HCT116 (cell line): ENCODE measurements at regions of chr3 and their contacts with region 1.

Region 1: DNA sequence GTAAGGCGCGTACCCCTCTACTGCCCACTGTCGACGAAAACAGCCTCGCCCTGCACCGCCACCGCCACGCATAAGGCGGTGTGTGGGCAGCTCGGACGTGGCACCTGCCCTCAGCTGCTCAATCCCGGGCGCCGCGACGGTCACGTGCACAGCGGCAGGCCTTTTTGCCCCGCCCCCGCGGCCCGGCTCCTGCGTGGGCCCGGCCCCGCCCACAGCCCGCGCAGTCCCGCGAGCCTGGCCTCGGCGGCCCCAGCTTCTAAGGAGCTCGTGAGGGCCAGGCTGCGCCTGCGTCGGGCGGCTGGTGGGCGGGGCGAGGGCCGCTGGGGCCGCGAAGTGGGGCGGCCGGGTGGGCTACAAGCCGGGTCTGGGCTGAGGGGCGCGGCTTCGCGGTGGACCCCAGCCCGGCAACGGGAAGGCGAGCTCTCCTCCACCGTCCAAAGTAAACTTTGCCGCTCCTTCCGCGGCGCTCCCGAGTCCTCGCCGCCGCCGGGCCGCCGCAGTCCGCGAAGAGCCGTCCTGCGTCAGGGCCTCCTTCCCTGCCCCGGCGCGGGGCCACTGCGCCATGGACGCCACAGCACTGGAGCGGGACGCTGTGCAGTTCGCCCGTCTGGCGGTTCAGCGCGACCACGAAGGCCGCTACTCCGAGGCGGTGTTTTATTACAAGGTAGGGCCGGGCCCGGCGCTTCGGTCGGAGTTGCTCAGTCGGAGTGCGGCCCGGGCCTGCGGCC is at the start of gene CAPN7:
- DNase-seq: peak; percentile 85
- ATAC-seq: peak; percentile 93
- H3K4me3 ChIP-seq: peak within 1 kb of the TSS; percentile 84 to 92
- H3K27ac ChIP-seq: peak within 1 kb of the TSS; percentile 75
- H3K4me1 ChIP-seq: peaks cover 6 to 18% of the 10 kb centered on the region in 2 experiments; a peak in 3 of 4 replicates
- H3K27me3 ChIP-seq: no peaks in the 10 kb centered on the region
- CTCF ChIP-seq: peak in 2 of 3 experiments; percentile 36 to 50; a peak in 3 of 6 replicates
- POLR2A ChIP-seq: peak; percentile 74
- RAD21 ChIP-seq: no peak
- total RNA-seq, gene CAPN7: 27.7 TPM

Region 2: DNA sequence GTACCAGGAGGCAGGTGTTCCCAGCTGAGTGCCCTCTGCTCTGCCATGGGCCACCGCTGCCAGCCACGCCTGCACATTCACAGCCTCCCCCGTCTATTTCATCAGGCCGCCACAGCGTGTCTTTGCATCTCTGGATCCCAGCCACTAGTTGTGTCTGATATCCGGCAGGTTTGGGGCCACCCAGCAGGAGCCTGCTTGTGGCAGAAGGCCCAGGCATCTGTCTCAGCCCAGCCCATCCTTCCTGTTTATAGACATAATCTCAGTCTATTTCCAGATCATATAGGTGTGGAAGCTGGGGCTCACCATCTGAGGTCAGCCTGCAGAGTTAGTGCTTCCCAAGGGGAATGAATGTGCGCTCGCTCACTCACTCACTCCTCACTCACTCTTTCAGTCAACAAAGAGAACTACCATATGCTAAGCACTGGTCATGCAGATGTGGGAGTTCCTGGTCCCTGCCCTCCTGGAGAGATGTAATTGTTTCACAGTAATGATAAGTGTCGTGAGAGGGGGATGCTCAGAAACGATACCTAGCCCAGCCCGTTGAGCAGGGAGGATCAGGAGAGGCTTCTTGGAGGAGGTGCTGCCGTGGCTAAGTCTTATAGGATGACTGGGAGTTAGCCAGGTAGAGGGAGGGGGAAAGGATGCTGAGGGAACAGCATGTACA is 326.8 kb before region 1 on chr3:
- CTCF ChIA-PET with region 1: no interaction called
- POLR2A ChIA-PET with region 1: no interaction called
- RAD21 ChIA-PET with region 1: no interaction called
- intact Hi-C with region 1: no loop called
- DNase-seq: no peak
- ATAC-seq: peak; percentile 74
- H3K4me3 ChIP-seq: no peak overlapping the region
- H3K27ac ChIP-seq: no peak overlapping the region
- H3K4me1 ChIP-seq: peaks cover 0 to 8% of the 10 kb centered on the region in 2 experiments; a peak in 1 of 4 replicates
- H3K27me3 ChIP-seq: no peaks in the 10 kb centered on the region; the same call in 1 of the 2 replicates
- CTCF ChIP-seq: no peak
- POLR2A ChIP-seq: no peak
- RAD21 ChIP-seq: no peak

Region 3: DNA sequence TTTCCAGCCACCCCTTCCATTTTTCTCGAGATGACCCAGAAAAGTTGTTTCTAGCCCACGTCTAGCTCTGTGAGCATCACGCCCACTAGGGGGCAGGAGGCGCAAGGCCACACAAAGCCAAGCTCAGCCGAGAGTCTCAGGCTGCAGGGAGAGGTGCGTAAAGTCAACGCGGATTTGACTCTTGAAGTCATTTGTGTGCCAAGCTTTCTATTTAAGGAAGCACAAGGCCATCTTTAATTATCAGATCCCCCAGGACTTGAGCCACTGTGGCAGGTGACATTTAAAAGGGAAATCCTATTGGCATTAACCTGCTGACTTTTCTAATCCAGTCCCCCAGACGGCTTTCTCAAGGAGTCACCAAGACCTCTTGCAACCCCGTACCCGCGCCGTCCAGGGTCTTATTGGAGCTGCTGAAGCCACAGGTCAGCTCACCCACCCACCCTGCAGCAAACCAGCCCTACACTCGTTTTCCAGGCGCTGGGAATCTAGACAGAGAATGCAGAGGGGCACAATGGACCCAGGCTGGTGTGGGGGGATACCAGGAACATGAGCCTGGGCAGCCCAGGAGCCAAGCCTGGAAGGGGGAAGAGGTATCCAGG is 62.0 kb after region 1 on chr3:
- CTCF ChIA-PET with region 1: interaction called, 12 read pairs
- POLR2A ChIA-PET with region 1: no interaction called
- RAD21 ChIA-PET with region 1: no interaction called
- intact Hi-C with region 1: no loop called
- DNase-seq: peak; percentile 65
- ATAC-seq: peak; percentile 77
- H3K4me3 ChIP-seq: no peak overlapping the region
- H3K27ac ChIP-seq: no peak overlapping the region
- H3K4me1 ChIP-seq: peaks cover 13 to 29% of the 10 kb centered on the region in 2 experiments
- H3K27me3 ChIP-seq: no peaks in the 10 kb centered on the region
- CTCF ChIP-seq: peak; percentile 95 to 97 (median 96)
- POLR2A ChIP-seq: no peak
- RAD21 ChIP-seq: peak; percentile 99

Region 4: GRCh38 chr3:15405448-15406050 is 199.5 kb after region 1 on chr3:
- CTCF ChIA-PET with region 1: interaction called, 43 read pairs
- POLR2A ChIA-PET with region 1: no interaction called
- RAD21 ChIA-PET with region 1: interaction called in 1 of 2 experiments, 4 read pairs
- intact Hi-C with region 1: no loop called
- DNase-seq: peak; percentile 48
- ATAC-seq: peak; percentile 81
- H3K4me3 ChIP-seq: no peak overlapping the region
- H3K27ac ChIP-seq: no peak overlapping the region
- H3K4me1 ChIP-seq: peaks cover 0 to 5% of the 10 kb centered on the region in 2 experiments; a peak in 1 of 4 replicates
- H3K27me3 ChIP-seq: no peaks in the 10 kb centered on the region
- CTCF ChIP-seq: peak; percentile 55 to 74 (median 69)
- POLR2A ChIP-seq: no peak
- RAD21 ChIP-seq: peak; percentile 74

Region 5: DNA sequence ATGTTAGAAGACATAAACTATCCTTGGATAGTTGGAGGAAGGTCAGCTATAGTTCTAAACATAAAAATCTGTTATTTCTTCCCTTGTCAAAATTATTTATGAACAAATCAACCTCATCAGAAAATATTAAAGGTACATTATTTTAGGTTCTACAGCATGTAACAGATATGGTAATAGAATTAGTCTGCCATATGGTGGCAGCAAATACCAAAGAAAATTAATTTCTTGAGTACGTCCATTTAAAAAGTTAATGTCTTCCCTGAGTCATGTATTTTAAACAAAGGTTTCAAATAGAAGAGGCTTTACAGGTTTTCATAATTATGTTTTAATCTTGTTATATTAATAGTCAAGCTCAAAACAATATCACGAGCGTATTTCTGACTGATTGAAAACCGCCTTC is 609.6 kb after region 1 on chr3:
- CTCF ChIA-PET with region 1: interaction called, 8 read pairs
- POLR2A ChIA-PET with region 1: no interaction called
- RAD21 ChIA-PET with region 1: no interaction called
- intact Hi-C with region 1: loop called (anchors 2 kb)
- DNase-seq: peak; percentile 49
- ATAC-seq: peak; percentile 67; the same call in 1 of the 2 replicates
- H3K4me3 ChIP-seq: no peak overlapping the region
- H3K27ac ChIP-seq: no peak overlapping the region
- H3K4me1 ChIP-seq: peaks cover 2 to 3% of the 10 kb centered on the region in 2 experiments; a peak in 1 of 4 replicates
- H3K27me3 ChIP-seq: no peaks in the 10 kb centered on the region
- CTCF ChIP-seq: peak in 2 of 3 experiments; percentile 49 to 50; a peak in 2 of 6 replicates
- POLR2A ChIP-seq: no peak
- RAD21 ChIP-seq: peak; percentile 71

Region 6: GRCh38 chr3:16247276-16248061 is 1041.4 kb after region 1 on chr3:
- CTCF ChIA-PET with region 1: no interaction called
- POLR2A ChIA-PET with region 1: no interaction called
- RAD21 ChIA-PET with region 1: no interaction called
- intact Hi-C with region 1: loop called (anchors 5 kb)
- DNase-seq: peak; percentile 66
- ATAC-seq: peak; percentile 88
- H3K4me3 ChIP-seq: no peak overlapping the region
- H3K27ac ChIP-seq: no peak overlapping the region
- H3K4me1 ChIP-seq: peaks cover 0 to 15% of the 10 kb centered on the region in 2 experiments; a peak in 1 of 4 replicates
- H3K27me3 ChIP-seq: no peaks in the 10 kb centered on the region
- CTCF ChIP-seq: peak; percentile 82 to 97 (median 93)
- POLR2A ChIP-seq: no peak
- RAD21 ChIP-seq: peak; percentile 97